ENCODE measurements at regions of chr6 and their contacts with region 1.

Region 1: GRCh38 chr6:80214436-80215022 is 108.1 kb downstream of the BCKDHB start:
- DNase-seq: peak in 2 of 3 donors; percentile 61 to 62
- H3K4me3 ChIP-seq: no peak overlapping the region
- H3K27ac ChIP-seq: no peak overlapping the region
- H3K4me1 ChIP-seq: peaks cover 0 to 4% (median under 1%) of the 10 kb centered on the region in 4 experiments
- H3K27me3 ChIP-seq: no peaks in the 10 kb centered on the region

Region 2: GRCh38 chr6:78910591-78911171 is 1303.8 kb before region 1 on chr6:
- CTCF ChIA-PET with region 1: no interaction called
- POLR2A ChIA-PET with region 1: no interaction called
- DNase-seq: peak; percentile 12 to 53 (median 47)
- H3K4me3 ChIP-seq: peak overlapping the region; percentile 11 to 77 (median 62)
- H3K27ac ChIP-seq: no peak overlapping the region
- H3K4me1 ChIP-seq: peaks cover 0 to 10% (median 9%) of the 10 kb centered on the region in 4 experiments
- H3K27me3 ChIP-seq: peaks cover 5 to 21% (median 16%) of the 10 kb centered on the region in 5 experiments

Region 3: DNA sequence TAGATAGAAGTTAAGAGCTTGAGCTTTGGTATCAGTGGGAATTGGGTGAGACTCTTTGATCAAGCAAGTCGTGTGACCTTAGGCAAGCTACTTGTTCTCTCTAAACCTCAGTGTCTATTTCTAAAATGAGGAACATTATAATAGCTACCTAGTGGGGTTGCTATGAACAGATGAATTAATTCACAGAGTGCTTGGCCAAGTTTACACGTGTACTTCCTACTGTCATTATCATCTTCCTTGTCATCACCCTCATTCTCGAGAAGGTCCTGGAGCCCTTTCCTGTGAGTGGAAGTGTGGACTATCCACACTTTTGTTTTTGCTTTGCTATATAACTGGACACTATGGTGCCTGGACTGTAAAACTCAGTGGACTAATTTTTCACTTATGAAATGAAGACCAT is 44.1 kb before region 1 on chr6:
- CTCF ChIA-PET with region 1: no interaction called
- POLR2A ChIA-PET with region 1: no interaction called
- DNase-seq: peak in 1 of 3 donors; percentile 2
- H3K4me3 ChIP-seq: no peak overlapping the region
- H3K27ac ChIP-seq: no peak overlapping the region
- H3K4me1 ChIP-seq: peaks cover 0 to 15% (median 6%) of the 10 kb centered on the region in 4 experiments
- H3K27me3 ChIP-seq: no peaks in the 10 kb centered on the region

Region 4: DNA sequence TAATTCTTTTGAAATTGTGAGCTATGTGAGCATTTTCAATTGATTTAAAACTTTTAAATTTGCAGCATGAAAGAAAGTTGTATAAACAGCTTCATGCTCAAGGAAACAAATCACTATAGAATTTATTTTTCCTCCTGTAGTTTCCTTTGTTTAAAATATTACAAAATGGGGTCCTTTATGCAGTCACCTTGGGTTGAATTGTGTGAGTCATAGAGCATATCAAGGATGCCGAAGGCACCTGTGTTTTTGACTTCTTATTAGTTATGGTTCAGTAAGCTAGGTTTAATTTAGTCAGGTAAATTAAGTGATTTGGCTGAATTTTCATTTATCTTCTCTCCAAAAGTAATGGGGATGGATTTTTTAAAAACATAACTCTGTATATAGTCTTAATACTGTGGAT is 11.2 kb before region 1 on chr6:
- CTCF ChIA-PET with region 1: interaction called, 12 read pairs
- POLR2A ChIA-PET with region 1: no interaction called
- DNase-seq: no peak
- H3K4me3 ChIP-seq: no peak overlapping the region
- H3K27ac ChIP-seq: no peak overlapping the region
- H3K4me1 ChIP-seq: no peaks in the 10 kb centered on the region
- H3K27me3 ChIP-seq: no peaks in the 10 kb centered on the region

Region 5: GRCh38 chr6:80579391-80580023 is 365.0 kb after region 1 on chr6:
- CTCF ChIA-PET with region 1: no interaction called
- POLR2A ChIA-PET with region 1: no interaction called
- DNase-seq: no peak
- H3K4me3 ChIP-seq: no peak overlapping the region
- H3K27ac ChIP-seq: no peak overlapping the region
- H3K4me1 ChIP-seq: no peaks in the 10 kb centered on the region
- H3K27me3 ChIP-seq: no peaks in the 10 kb centered on the region

Measured in common myeloid progenitor, CD34-positive (primary cell).